ENCODE measurements at regions of chr18 and their contacts with region 1.

Region 1: GRCh38 chr18:24362758-24363157 is 34.9 kb downstream of the OSBPL1A start:
- DNase-seq: no peak
- H3K4me3 Mint-ChIP-seq: no peak overlapping the region
- H3K27ac Mint-ChIP-seq: no peak overlapping the region
- H3K4me1 Mint-ChIP-seq: no peaks in the 10 kb centered on the region
- H3K27me3 Mint-ChIP-seq: no peaks in the 10 kb centered on the region
- CTCF ChIP-seq: no peak

Region 2: DNA sequence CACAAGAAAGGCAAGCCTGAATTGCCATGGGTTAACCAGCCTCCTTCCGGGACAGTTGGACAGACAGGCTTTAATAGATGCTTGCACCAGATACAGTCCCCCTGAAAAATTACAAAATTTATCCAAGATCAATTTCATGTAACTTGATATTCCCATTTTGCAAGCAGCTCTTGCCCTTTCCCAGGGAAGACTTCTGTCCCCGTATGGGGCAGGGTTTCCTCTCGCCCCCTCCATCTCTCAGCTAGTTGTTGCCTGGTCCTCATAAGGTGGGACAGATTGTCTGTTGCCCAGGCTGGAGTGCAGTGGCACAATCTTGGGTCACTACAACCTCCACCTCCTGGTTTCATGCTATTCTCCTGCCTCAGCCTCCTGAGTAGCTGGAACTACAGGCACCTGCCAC is 287.0 kb before region 1 on chr18:
- CTCF ChIA-PET with region 1: no interaction called
- POLR2A ChIA-PET with region 1: no interaction called
- intact Hi-C with region 1: no loop called
- DNase-seq: peak; percentile 16
- H3K4me3 Mint-ChIP-seq: peak overlapping the region; percentile 24
- H3K27ac Mint-ChIP-seq: peak overlapping the region; percentile 86
- H3K4me1 Mint-ChIP-seq: peaks cover 19% of the 10 kb centered on the region
- H3K27me3 Mint-ChIP-seq: no peaks in the 10 kb centered on the region
- CTCF ChIP-seq: no peak

Region 3: GRCh38 chr18:24176727-24177416 is 185.9 kb before region 1 on chr18:
- CTCF ChIA-PET with region 1: interaction called, 6 read pairs
- POLR2A ChIA-PET with region 1: no interaction called
- intact Hi-C with region 1: loop called (anchors 1 kb)
- DNase-seq: peak; percentile 65
- H3K4me3 Mint-ChIP-seq: no peak overlapping the region
- H3K27ac Mint-ChIP-seq: no peak overlapping the region
- H3K4me1 Mint-ChIP-seq: peaks cover 4% of the 10 kb centered on the region
- H3K27me3 Mint-ChIP-seq: no peaks in the 10 kb centered on the region
- CTCF ChIP-seq: peak; percentile 82

Region 4: GRCh38 chr18:24259869-24260641 is 102.7 kb before region 1 on chr18:
- CTCF ChIA-PET with region 1: no interaction called
- POLR2A ChIA-PET with region 1: no interaction called
- intact Hi-C with region 1: no loop called
- DNase-seq: no peak
- H3K4me3 Mint-ChIP-seq: no peak overlapping the region
- H3K27ac Mint-ChIP-seq: no peak overlapping the region
- H3K4me1 Mint-ChIP-seq: peaks cover 4% of the 10 kb centered on the region
- H3K27me3 Mint-ChIP-seq: no peaks in the 10 kb centered on the region
- CTCF ChIP-seq: no peak

Region 5: GRCh38 chr18:24397694-24398365 is 35.1 kb after region 1 on chr18 and contains the start of gene OSBPL1A:
- CTCF ChIA-PET with region 1: interaction called, 20 read pairs
- POLR2A ChIA-PET with region 1: interaction called, 4 read pairs
- intact Hi-C with region 1: no loop called
- DNase-seq: peak; percentile 94
- H3K4me3 Mint-ChIP-seq: peak within 1 kb of the TSS; percentile 77
- H3K27ac Mint-ChIP-seq: peak within 1 kb of the TSS; percentile 88
- H3K4me1 Mint-ChIP-seq: peaks cover 8% of the 10 kb centered on the region
- H3K27me3 Mint-ChIP-seq: no peaks in the 10 kb centered on the region
- CTCF ChIP-seq: no peak
- total RNA-seq, gene OSBPL1A: 14.8 and 21.5 TPM in 2 replicates

Region 6: DNA sequence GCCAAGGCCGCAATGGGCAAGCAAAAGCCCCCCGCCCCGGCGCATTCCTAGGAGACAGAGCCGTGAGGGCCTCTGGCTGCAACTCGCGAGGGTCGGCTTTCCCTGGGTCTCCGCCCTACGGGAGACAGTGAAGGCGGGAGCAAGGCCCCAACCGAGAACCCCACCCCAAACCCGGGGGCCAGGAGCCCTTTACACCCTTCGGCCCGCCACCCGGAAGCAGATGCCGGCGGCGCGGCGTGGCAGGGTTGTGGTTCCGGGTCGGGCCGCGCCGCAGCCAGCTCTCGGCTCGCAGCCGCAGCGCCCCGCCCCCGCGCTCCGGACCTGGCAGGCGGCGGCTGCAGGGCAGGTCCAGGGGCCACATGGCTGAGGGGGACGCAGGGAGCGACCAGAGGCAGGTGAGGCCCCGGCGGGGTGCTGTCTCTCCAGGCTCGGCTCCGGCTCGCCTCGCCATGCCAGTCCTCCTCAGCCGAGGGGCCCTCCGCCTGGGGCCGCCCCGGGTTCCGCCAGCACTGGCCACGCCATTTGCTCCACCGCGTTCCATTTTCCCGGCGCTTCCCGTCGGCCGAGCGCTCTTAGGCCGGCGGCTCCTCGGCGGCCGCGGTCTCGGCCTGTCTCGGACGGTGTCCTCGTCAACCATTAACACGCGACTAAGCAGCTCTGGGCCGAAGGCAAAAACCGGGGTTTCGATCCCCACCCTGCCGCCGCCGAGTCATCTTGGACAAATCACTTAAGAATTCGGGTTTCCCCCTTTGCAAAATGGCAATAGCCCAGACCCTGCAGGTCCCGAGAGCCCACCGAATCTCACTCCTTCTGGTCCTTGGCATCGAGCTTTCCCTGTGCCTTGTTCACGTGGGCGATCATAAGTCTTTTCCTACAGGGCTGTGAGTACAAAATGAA is 63.9 kb after region 1 on chr18 and contains the start of gene IMPACT:
- CTCF ChIA-PET with region 1: interaction called, 21 read pairs
- POLR2A ChIA-PET with region 1: interaction called, 7 read pairs
- intact Hi-C with region 1: loop called (anchors 5 kb)
- DNase-seq: peak; percentile 82
- H3K4me3 Mint-ChIP-seq: peak within 1 kb of the TSS; percentile 92
- H3K27ac Mint-ChIP-seq: peak within 1 kb of the TSS; percentile 94
- H3K4me1 Mint-ChIP-seq: peaks cover 6% of the 10 kb centered on the region
- H3K27me3 Mint-ChIP-seq: no peaks in the 10 kb centered on the region
- CTCF ChIP-seq: no peak
- total RNA-seq, gene IMPACT: 88.3 and 97.2 TPM in 2 replicates

Region 7: GRCh38 chr18:24726727-24727492 is 364.2 kb after region 1 on chr18:
- CTCF ChIA-PET with region 1: interaction called, 7 read pairs
- POLR2A ChIA-PET with region 1: no interaction called
- intact Hi-C with region 1: loop called (anchors 2 kb)
- DNase-seq: peak; percentile 76
- H3K4me3 Mint-ChIP-seq: no peak overlapping the region
- H3K27ac Mint-ChIP-seq: no peak overlapping the region
- H3K4me1 Mint-ChIP-seq: no peaks in the 10 kb centered on the region
- H3K27me3 Mint-ChIP-seq: peaks cover 46% of the 10 kb centered on the region
- CTCF ChIP-seq: peak; percentile 75